ENCODE measurements at regions of chr7 and their contacts with region 1.

Region 1: GRCh38 chr7:20172736-20173334 is 44.3 kb downstream of the MACC1 start:
- DNase-seq: peak; percentile 71
- H3K4me3 Mint-ChIP-seq: no peak overlapping the region
- H3K27ac Mint-ChIP-seq: no peak overlapping the region
- H3K4me1 Mint-ChIP-seq: no peaks in the 10 kb centered on the region
- H3K27me3 Mint-ChIP-seq: no peaks in the 10 kb centered on the region
- CTCF ChIP-seq: peak; percentile 60

Region 2: GRCh38 chr7:19747740-19748339 is 425.0 kb before region 1 on chr7:
- CTCF ChIA-PET with region 1: interaction called, 20 read pairs
- POLR2A ChIA-PET with region 1: interaction called, 3 read pairs
- intact Hi-C with region 1: loop called (anchors 2 kb)
- DNase-seq: peak; percentile 59
- H3K4me3 Mint-ChIP-seq: no peak overlapping the region
- H3K27ac Mint-ChIP-seq: no peak overlapping the region
- H3K4me1 Mint-ChIP-seq: peaks cover 9% of the 10 kb centered on the region
- H3K27me3 Mint-ChIP-seq: no peaks in the 10 kb centered on the region
- CTCF ChIP-seq: peak; percentile 66

Region 3: DNA sequence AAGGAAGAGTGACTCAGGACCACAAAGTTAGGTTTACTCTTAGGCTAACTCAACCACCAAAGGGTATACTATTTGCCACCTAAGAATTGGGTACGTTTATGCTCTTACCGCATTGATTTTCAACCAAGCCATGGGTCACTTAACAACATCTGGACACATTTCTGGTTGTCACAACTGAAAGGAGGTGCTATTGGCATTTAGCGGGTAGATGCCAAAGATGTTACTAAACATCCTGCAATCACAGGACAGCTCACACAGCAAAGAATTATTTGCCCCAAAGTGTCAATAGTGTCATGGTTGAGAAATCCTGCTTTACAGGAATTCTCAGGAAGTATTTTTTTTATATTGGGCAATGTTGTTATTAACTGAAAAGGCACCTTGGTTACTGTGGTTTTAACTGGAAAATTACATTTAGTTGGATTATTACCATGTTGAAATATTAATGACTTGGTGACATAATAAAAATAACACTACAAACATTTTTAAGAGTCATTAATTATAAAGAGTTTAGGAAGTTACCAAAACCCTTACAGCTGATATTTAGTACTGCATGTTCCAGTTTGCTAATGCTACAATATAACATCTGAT is 214.4 kb before region 1 on chr7:
- CTCF ChIA-PET with region 1: no interaction called
- POLR2A ChIA-PET with region 1: no interaction called
- intact Hi-C with region 1: loop called (anchors 10 kb)
- DNase-seq: peak; percentile 89
- H3K4me3 Mint-ChIP-seq: peak overlapping the region; percentile 29
- H3K27ac Mint-ChIP-seq: peak overlapping the region; percentile 96
- H3K4me1 Mint-ChIP-seq: peaks cover 12% of the 10 kb centered on the region
- H3K27me3 Mint-ChIP-seq: no peaks in the 10 kb centered on the region
- CTCF ChIP-seq: no peak

Region 4: DNA sequence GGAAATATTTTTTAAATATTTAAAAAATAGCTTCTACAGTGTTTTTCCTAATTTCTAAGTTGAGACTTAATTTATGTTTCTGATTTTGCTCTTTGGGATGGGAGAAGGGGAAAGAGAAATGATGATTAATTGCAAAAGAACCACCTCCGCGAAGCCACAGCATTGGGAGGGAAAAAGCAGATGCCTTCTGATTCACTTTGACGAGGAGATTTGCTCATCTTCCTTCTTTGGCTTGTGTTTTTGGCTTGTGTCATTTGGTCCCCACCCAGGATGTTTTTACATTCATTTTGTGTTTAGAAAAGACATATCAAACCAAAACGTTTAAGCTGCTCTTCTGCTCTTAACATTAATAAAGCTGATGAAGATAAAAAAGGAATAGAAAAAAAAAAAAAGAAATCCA is 77.4 kb before region 1 on chr7:
- CTCF ChIA-PET with region 1: no interaction called
- POLR2A ChIA-PET with region 1: no interaction called
- intact Hi-C with region 1: no loop called
- DNase-seq: no peak
- H3K4me3 Mint-ChIP-seq: no peak overlapping the region
- H3K27ac Mint-ChIP-seq: no peak overlapping the region
- H3K4me1 Mint-ChIP-seq: no peaks in the 10 kb centered on the region
- H3K27me3 Mint-ChIP-seq: no peaks in the 10 kb centered on the region
- CTCF ChIP-seq: no peak

Region 5: DNA sequence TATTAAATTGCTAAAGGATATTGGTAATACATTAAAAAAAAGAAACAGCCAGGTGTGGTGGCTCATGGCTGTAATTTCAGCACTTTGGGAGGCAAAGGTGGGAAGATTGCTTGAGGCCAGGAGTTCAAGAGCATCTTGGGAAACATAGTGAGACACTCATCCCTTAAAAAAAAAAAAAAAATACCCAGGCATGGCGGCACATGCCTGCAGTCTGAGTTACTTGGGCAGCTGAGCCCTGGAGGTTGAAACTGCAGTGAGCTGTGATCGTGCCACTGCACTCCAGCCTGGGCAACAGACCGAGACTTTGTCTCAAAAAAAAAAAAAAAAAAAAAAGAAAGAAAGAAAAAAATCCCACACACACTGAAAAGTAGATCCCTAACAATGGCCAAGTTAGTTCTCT is 15.4 kb before region 1 on chr7:
- CTCF ChIA-PET with region 1: interaction called, 11 read pairs
- POLR2A ChIA-PET with region 1: no interaction called
- intact Hi-C with region 1: no loop called
- DNase-seq: no peak
- H3K4me3 Mint-ChIP-seq: no peak overlapping the region
- H3K27ac Mint-ChIP-seq: no peak overlapping the region
- H3K4me1 Mint-ChIP-seq: no peaks in the 10 kb centered on the region
- H3K27me3 Mint-ChIP-seq: no peaks in the 10 kb centered on the region
- CTCF ChIP-seq: no peak

Measured in MCF 10A (cell line).